AG04450 (cell line): ENCODE measurements at regions of chr1 and their contacts with region 1.

Region 1: GRCh38 chr1:119675349-119676345 is 27.6 kb upstream of the ZNF697 start:
- DNase-seq: peak; percentile 78
- H3K4me3 ChIP-seq: peak overlapping the region; percentile 57
- H3K27ac ChIP-seq: no peak overlapping the region
- H3K27me3 ChIP-seq: peaks cover 8% of the 10 kb centered on the region
- CTCF ChIP-seq: peak; percentile 85

Region 2: GRCh38 chr1:118987468-118988185 is 688.0 kb before region 1 on chr1:
- CTCF ChIA-PET with region 1: no interaction called
- POLR2A ChIA-PET with region 1: no interaction called
- DNase-seq: no peak
- H3K4me3 ChIP-seq: peak overlapping the region; percentile 31
- H3K27ac ChIP-seq: no peak overlapping the region
- H3K27me3 ChIP-seq: peaks cover 100% of the 10 kb centered on the region
- CTCF ChIP-seq: no peak

Region 3: DNA sequence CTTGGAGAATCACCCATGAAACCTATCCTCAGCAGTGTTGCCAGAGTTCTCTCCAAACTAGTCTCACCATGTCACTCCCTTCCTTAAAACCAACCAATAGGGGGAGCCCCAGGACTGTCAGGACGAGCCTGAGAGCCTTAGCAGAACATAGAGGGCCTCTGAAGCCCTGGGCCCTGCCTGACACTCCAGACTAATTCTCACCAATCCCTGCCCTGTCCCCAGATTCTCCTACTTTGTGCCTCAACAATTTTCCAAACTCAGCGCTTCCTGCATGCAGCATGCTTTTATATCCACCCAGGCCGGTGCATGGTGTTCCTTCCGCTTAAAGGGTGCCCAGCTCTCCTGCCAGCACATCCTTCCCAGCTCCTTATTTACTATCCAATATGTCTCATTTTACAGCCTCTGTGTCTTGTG is 125.9 kb before region 1 on chr1:
- CTCF ChIA-PET with region 1: interaction called, 11 read pairs
- POLR2A ChIA-PET with region 1: no interaction called
- DNase-seq: peak; percentile 11
- H3K4me3 ChIP-seq: no peak overlapping the region
- H3K27ac ChIP-seq: no peak overlapping the region
- H3K27me3 ChIP-seq: peaks cover 8% of the 10 kb centered on the region
- CTCF ChIP-seq: peak; percentile 65

Region 4: DNA sequence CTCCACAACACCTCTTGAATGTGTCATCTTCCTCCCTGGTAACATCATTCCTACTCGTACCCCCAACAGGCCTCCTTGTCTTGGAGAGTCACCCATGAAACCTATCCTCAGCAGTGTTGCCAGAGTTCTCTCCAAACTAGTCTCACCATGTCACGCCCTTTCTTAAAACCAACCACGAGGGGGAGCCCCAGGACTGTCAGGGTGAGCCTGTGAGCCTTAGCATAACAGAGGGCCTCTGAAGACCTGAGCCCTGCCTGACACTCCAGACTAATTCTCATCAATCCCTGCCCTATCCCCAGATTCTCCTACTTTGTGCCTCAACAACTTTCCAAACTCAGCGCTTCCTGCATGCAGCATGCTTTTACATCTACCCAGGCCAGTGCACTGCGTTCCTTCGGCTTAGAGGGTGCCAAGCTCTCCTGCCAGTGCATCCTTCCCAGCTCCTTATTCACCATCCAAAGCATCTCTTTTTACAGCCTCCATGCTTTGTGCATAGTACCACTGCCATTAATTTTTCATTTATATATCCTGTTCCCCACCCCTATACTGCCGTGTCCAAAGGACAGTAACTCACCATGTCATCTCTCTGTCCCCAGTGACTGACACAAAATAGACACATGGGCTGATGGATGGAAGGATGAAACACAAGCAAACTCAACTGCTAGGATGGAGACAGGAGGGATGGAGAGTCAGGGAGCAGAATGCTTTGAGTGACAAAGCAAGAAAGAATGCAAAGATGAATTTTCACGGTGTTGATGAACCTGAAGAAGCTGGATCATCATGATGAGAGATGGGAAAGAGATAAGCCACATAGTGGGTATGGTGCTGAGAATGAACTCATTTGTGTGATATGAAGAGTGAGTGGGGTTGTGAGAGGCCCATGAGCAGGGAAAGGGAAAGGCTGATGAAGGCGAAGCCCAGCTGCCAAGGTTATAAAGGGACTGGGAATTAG is 61.6 kb before region 1 on chr1:
- CTCF ChIA-PET with region 1: interaction called, 107 read pairs
- POLR2A ChIA-PET with region 1: interaction called, 3 read pairs
- DNase-seq: peak; percentile 75
- H3K4me3 ChIP-seq: no peak overlapping the region
- H3K27ac ChIP-seq: no peak overlapping the region
- H3K27me3 ChIP-seq: peaks cover 3% of the 10 kb centered on the region
- CTCF ChIP-seq: peak; percentile 84

Region 5: GRCh38 chr1:119631433-119632102 is 44.1 kb before region 1 on chr1:
- CTCF ChIA-PET with region 1: interaction called, 21 read pairs
- POLR2A ChIA-PET with region 1: no interaction called
- DNase-seq: peak; percentile 34
- H3K4me3 ChIP-seq: peak overlapping the region; percentile 11; the same call in 1 of the 2 replicates
- H3K27ac ChIP-seq: peak overlapping the region; percentile 55
- H3K27me3 ChIP-seq: no peaks in the 10 kb centered on the region
- CTCF ChIP-seq: no peak

Region 6: GRCh38 chr1:119656410-119656955 is 19.2 kb before region 1 on chr1:
- CTCF ChIA-PET with region 1: interaction called, 72 read pairs
- POLR2A ChIA-PET with region 1: no interaction called
- DNase-seq: no peak
- H3K4me3 ChIP-seq: no peak overlapping the region
- H3K27ac ChIP-seq: no peak overlapping the region
- H3K27me3 ChIP-seq: peaks cover 4% of the 10 kb centered on the region
- CTCF ChIP-seq: no peak

Region 7: GRCh38 chr1:119686649-119687048 is 11.0 kb after region 1 on chr1:
- CTCF ChIA-PET with region 1: interaction called, 26 read pairs
- POLR2A ChIA-PET with region 1: no interaction called
- DNase-seq: no peak
- H3K4me3 ChIP-seq: no peak overlapping the region
- H3K27ac ChIP-seq: no peak overlapping the region
- H3K27me3 ChIP-seq: peaks cover 8% of the 10 kb centered on the region
- CTCF ChIP-seq: no peak

Region 8: GRCh38 chr1:119711804-119712341 is 36.2 kb after region 1 on chr1 and contains the start of gene PHGDH:
- CTCF ChIA-PET with region 1: interaction called, 29 read pairs
- POLR2A ChIA-PET with region 1: no interaction called
- DNase-seq: peak; percentile 74
- H3K4me3 ChIP-seq: peak within 1 kb of the TSS; percentile 99
- H3K27ac ChIP-seq: peak within 1 kb of the TSS; percentile 88
- H3K27me3 ChIP-seq: peaks cover 14% of the 10 kb centered on the region
- CTCF ChIP-seq: no peak
- polyA plus RNA-seq, gene PHGDH: 108 and 174 TPM in 2 replicates